Endothelial cell of umbilical vein (primary cell): ENCODE measurements at regions of chr5 and their contacts with region 1.

Region 1: GRCh38 chr5:126354012-126354857 is 69.0 kb upstream of the GRAMD2B start:
- DNase-seq: peak; percentile 74
- H3K4me3 ChIP-seq: peak overlapping the region in 1 of 3 experiments; percentile 51
- H3K27ac ChIP-seq: peak overlapping the region; percentile 81
- H3K4me1 ChIP-seq: peaks cover 36% of the 10 kb centered on the region
- H3K27me3 ChIP-seq: peaks cover 0 to 14% of the 10 kb centered on the region in 2 experiments
- CTCF ChIP-seq: peak in 1 of 2 donors; percentile 9
- POLR2A ChIP-seq: no peak

Region 2: DNA sequence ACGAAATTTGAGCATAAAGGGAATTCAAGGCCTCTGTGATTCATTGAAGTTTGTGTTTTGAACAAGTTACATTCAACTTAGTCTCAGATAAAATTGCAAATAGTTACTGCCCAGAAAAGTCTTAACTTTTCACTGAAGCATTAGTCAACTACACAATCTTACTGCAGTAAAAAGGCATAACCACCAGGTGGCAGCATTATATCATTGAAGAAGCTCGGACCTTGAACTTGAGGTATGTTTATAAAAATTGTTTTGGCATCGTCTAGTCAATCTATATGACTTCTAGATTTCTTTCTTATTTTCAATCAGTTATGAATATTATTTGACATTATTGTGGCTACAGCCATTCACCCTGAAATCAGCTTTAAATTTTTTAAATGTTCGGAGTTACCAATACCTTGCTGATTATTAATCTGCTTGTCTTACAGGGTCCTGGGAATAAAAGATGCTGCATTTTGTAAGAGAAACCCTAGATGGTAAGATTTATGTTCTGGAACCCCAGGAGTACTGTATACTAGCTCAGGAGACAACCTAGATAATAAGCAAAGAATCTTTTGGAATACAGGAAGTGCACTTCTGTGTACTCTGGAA is 14.9 kb before region 1 on chr5:
- CTCF ChIA-PET with region 1: interaction called, 24 read pairs
- POLR2A ChIA-PET with region 1: no interaction called
- dilution Hi-C with region 1: no loop called
- intact Hi-C with region 1: no loop called
- DNase-seq: peak; percentile 65
- H3K4me3 ChIP-seq: no peak overlapping the region
- H3K27ac ChIP-seq: no peak overlapping the region
- H3K4me1 ChIP-seq: no peaks in the 10 kb centered on the region
- H3K27me3 ChIP-seq: peaks cover 0 to 4% of the 10 kb centered on the region in 2 experiments
- CTCF ChIP-seq: peak; percentile 59 to 64
- POLR2A ChIP-seq: no peak

Region 3: GRCh38 chr5:126490167-126490940 is 136.1 kb after region 1 on chr5:
- CTCF ChIA-PET with region 1: interaction called, 4 read pairs
- POLR2A ChIA-PET with region 1: no interaction called
- dilution Hi-C with region 1: no loop called
- intact Hi-C with region 1: loop called (anchors 1 kb)
- DNase-seq: no peak
- H3K4me3 ChIP-seq: no peak overlapping the region
- H3K27ac ChIP-seq: no peak overlapping the region
- H3K4me1 ChIP-seq: no peaks in the 10 kb centered on the region
- H3K27me3 ChIP-seq: no peaks in the 10 kb centered on the region
- CTCF ChIP-seq: no peak
- POLR2A ChIP-seq: no peak

Region 4: GRCh38 chr5:126531543-126532120 is 177.4 kb after region 1 on chr5:
- CTCF ChIA-PET with region 1: interaction called, 10 read pairs
- POLR2A ChIA-PET with region 1: no interaction called
- dilution Hi-C with region 1: loop called (anchors 25 kb)
- intact Hi-C with region 1: no loop called
- DNase-seq: no peak
- H3K4me3 ChIP-seq: no peak overlapping the region
- H3K27ac ChIP-seq: no peak overlapping the region
- H3K4me1 ChIP-seq: no peaks in the 10 kb centered on the region
- H3K27me3 ChIP-seq: peaks cover 0 to 2% of the 10 kb centered on the region in 2 experiments
- CTCF ChIP-seq: no peak
- POLR2A ChIP-seq: no peak

Region 5: DNA sequence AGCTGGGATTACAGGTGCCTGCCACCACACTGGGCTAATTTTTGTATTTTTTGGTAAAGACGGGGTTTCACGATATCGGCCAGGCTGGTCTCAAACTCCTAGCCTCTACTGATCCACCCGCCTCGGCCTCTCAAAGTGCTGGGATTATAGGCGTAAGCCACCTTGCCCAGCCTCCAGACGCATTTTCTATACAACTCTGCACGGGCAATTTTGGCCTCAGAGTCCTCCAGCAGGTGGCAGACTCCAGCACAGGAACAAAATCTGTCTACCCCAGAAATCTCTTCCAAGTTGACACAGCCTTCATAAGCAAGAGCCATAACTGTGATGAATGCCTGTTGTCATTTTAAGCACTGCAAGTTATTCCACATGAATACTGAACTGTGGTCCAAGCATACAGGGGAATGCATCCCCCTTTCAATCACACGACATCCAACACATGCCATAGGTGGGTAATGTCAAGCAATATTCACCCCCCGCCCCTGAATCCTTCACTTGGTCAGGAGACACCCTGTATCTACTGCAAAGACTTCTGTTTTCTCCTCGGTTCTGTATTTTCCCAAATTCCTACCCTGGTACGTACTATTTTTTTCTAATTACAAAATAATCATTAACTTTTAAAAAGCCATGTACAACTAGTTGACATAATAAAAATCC is 190.0 kb after region 1 on chr5:
- CTCF ChIA-PET with region 1: interaction called, 128 read pairs
- POLR2A ChIA-PET with region 1: no interaction called
- dilution Hi-C with region 1: loop called (anchors 25 kb)
- intact Hi-C with region 1: loop called (anchors 1 kb)
- DNase-seq: peak; percentile 53
- H3K4me3 ChIP-seq: no peak overlapping the region
- H3K27ac ChIP-seq: no peak overlapping the region
- H3K4me1 ChIP-seq: no peaks in the 10 kb centered on the region
- H3K27me3 ChIP-seq: no peaks in the 10 kb centered on the region
- CTCF ChIP-seq: peak; percentile 46 to 66
- POLR2A ChIP-seq: no peak

Region 6: DNA sequence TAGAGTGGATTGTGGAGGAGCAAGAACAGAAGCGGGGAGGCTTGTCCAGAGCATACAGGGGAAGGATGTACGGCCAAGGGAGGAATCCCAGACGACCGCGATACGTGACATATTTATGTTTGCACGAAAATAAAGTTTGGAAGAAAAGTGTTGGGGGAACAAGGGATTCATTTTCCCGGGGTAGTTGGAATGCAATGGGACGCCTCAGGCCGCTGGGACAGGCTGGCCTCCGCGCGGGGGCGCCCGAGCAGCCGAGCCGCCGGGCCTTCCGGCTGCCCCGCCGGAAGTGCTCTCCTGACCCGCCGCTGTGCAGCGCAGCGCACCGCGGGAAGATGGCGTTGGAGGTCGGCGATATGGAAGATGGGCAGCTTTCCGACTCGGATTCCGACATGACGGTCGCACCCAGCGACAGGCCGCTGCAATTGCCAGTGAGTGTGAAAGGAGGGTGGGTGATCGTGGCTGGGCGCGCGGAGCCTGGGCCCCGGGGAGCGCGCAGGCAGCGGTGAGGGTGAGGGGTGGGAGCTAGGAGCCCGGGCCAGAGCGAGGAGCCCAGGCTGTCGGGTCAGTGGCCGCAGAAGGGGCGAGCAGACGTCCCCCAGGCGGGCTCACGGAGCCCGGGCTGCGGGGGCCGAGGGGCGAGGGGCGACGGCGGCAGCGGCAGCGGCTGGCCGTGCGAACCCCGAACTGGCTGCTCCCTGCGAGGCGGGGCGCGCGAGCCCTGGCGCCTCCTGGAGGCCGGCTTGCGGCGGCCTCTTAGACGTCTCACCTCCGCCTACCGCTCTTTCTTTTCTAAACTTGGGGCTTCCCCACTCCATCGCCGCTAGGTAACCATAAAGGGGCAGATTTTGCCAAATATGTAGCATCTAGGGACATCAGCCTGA is 246.6 kb after region 1 on chr5 and contains the start of gene PHAX:
- CTCF ChIA-PET with region 1: interaction called, 8 read pairs
- POLR2A ChIA-PET with region 1: no interaction called
- dilution Hi-C with region 1: no loop called
- intact Hi-C with region 1: loop called (anchors 1 kb)
- DNase-seq: peak; percentile 77
- H3K4me3 ChIP-seq: peak within 1 kb of the TSS; percentile 68 to 85 (median 83)
- H3K27ac ChIP-seq: peak within 1 kb of the TSS; percentile 61
- H3K4me1 ChIP-seq: peaks cover 19% of the 10 kb centered on the region
- H3K27me3 ChIP-seq: no peaks in the 10 kb centered on the region
- CTCF ChIP-seq: peak; percentile 82 to 85
- POLR2A ChIP-seq: peak; percentile 88
- total RNA-seq, gene PHAX: 48.2 and 51.2 TPM in 2 replicates